CD8-positive, alpha-beta memory T cell (primary cell): ENCODE measurements at regions of chr19 and their contacts with region 1.

Region 1: DNA sequence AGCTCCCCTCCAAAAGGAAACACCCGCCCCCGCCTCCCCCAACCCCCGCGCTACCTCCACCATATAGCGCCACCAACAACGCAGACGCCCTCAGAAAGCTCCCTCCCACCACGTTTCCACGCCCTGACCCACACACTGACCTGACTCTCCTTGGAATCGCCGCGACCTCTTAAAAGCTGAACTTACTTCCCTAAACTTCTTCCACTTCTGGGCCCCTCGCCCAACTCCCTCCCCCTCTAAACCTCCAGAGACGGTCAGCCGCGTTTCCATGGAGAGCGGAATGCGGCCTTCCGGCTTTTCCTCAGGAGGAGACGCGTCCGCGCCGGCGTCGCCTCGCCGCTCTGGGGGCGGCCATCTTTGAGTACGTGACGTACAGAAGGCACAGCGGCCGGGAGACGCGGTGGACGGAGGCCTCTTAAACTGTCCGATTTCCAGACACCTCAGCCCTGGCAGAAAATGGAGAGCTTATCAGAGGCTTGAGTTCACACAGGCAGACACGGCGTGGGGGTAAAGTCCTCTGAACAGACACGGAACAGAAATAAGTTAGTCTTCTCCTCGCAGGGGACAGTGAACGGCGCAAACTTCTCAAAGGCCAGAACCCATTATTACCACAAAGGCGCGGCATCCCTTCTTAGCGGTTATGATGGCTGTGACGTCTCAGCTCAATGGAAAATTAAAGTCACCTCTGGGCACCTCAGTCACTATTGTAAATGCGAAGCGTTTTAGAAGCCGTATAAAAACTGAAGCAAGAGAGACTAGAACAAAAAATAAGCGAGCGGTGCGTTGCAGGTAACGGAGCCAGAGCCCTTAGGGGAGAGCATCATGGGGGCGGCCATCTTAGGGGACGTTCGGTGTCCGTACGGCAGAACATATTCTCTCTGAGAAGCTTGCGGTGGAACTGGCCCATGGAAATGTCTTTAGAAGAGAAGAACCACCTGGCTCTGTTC is at the start of gene ZNF432:
- DNase-seq: peak; percentile 70 to 91 (median 80)
- H3K4me3 ChIP-seq: peak within 1 kb of the TSS; percentile 92
- H3K4me3 Mint-ChIP-seq: peak within 1 kb of the TSS; percentile 93 to 100 (median 97)
- H3K27ac ChIP-seq: peak within 1 kb of the TSS; percentile 98
- H3K27ac Mint-ChIP-seq: peak within 1 kb of the TSS; percentile 96 to 100 (median 99)
- H3K4me1 ChIP-seq: peaks cover 12% of the 10 kb centered on the region
- H3K4me1 Mint-ChIP-seq: peaks cover 24 to 45% (median 28%) of the 10 kb centered on the region in 3 donors
- H3K27me3 ChIP-seq: no peaks in the 10 kb centered on the region
- H3K27me3 Mint-ChIP-seq: peaks cover 0 to 1% of the 10 kb centered on the region in 2 donors
- total RNA-seq, gene ZNF432: 13.0 to 13.4 TPM

Region 2: DNA sequence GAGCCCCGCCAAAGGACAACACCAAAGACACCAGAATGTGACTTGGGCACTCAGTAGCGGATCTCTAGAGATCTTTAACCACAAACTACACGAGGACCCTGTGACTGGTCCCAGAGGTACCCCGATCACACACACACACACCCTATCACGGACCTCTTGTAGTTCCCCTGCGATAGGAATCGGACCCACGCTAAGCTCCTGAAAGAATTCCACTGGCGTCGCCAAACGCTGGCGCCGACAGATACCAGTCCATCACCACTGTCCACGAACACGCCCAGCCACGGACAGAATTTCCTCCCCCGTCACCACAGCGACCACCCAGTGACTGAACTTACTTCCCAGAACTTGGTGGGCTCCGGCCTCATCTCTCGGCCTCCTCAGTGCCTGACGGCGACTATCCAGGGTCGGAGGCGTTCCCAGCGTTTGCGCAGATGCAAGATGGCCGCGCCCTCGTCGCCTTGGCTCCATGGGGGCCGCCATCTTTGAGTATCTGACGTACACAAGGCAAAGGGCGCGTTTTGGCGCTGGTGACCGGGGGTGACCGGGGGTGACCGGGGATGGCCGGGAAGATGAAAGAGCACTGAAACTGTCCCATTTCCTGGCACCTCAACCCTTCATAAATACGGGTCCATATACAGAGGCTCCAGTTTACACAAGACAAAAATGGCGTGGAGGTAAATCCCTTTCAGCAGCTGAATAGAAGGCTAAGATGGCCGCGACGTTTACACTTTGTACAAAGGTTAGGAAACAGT is 40.8 kb before region 1 on chr19 and contains the start of gene ZNF615:
- CTCF ChIA-PET with region 1: no interaction called
- POLR2A ChIA-PET with region 1: interaction called, 10 read pairs
- DNase-seq: peak; percentile 75 to 90 (median 81)
- H3K4me3 ChIP-seq: peak within 1 kb of the TSS; percentile 94
- H3K4me3 Mint-ChIP-seq: peak within 1 kb of the TSS; percentile 94 to 98 (median 97)
- H3K27ac ChIP-seq: peak within 1 kb of the TSS; percentile 91
- H3K27ac Mint-ChIP-seq: peak within 1 kb of the TSS; percentile 64 to 99 (median 96)
- H3K4me1 ChIP-seq: peaks cover 10% of the 10 kb centered on the region
- H3K4me1 Mint-ChIP-seq: peaks cover 22 to 27% (median 25%) of the 10 kb centered on the region in 3 donors
- H3K27me3 ChIP-seq: no peaks in the 10 kb centered on the region
- H3K27me3 Mint-ChIP-seq: no peaks in the 10 kb centered on the region
- total RNA-seq, gene ZNF615: 7.6 to 8.8 TPM

Region 3: GRCh38 chr19:52028027-52028779 is 20.6 kb before region 1 on chr19 and contains the start of gene ZNF614:
- CTCF ChIA-PET with region 1: interaction called, 5 read pairs
- POLR2A ChIA-PET with region 1: interaction called, 12 read pairs
- DNase-seq: peak; percentile 64 to 91 (median 85)
- H3K4me3 ChIP-seq: peak within 1 kb of the TSS; percentile 99
- H3K4me3 Mint-ChIP-seq: peak within 1 kb of the TSS; percentile 87 to 98 (median 92)
- H3K27ac ChIP-seq: peak within 1 kb of the TSS; percentile 96
- H3K27ac Mint-ChIP-seq: peak within 1 kb of the TSS; percentile 90 to 99 (median 96)
- H3K4me1 ChIP-seq: peaks cover 11% of the 10 kb centered on the region
- H3K4me1 Mint-ChIP-seq: peaks cover 22 to 36% (median 34%) of the 10 kb centered on the region in 3 donors
- H3K27me3 ChIP-seq: no peaks in the 10 kb centered on the region
- H3K27me3 Mint-ChIP-seq: no peaks in the 10 kb centered on the region
- total RNA-seq, gene ZNF614: 12.3 to 13.0 TPM